OCI-LY7 (cell line): ENCODE measurements at regions of chr14 and their contacts with region 1.

Region 1: DNA sequence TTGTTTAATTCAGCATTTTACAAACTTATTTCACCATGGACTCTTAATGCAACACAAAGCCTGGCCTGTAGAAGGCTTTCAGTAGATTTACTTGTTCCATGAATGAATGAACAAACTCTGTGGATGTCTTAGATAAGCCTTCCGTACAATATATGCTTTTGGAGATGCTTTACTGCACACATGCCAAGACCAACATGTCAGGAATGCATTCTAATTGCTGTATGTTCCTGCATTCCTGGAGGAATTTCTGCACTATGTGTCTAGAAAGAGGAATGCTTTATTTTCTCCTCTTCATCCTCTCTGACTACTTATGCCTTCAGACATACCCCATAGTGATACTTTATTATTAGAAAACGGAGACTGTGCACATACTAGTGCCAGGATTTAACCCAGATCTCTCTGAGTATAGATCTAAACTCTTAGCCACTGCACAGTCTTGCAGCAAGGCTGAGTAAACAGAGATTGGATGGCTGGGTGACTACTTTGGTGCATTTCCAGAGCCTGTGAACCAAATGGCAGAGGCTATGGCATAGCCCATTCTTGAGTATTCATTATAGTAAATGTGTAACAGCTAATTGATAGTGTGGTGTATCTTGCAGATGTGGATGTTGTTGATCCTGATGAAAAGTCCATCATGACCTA is 108.2 kb downstream of the SYNE2 start:
- DNase-seq: no peak
- H3K4me3 ChIP-seq: no peak overlapping the region
- H3K27ac ChIP-seq: no peak overlapping the region
- H3K4me1 ChIP-seq: peaks cover 15% of the 10 kb centered on the region
- CTCF ChIP-seq: no peak

Region 2: DNA sequence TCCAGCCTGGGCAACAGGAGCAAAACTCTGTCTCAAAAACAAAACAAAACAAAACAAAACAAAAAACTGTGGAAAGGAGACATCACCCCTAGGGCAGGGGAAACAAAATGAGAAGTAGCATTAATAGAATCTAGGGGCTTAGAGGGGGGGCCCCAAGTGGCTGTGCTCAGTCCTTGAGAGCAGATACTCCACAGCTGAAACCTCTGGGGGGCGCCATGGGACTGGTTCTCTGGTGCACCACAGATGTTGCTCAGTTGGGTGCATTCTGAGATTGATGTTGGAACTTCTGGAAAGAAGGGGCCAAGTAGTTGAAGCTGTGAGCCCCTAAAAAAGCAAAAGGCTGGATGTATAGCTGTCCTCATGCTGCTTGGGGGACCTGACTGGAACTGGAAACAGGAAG is 120.1 kb before region 1 on chr14:
- CTCF ChIA-PET with region 1: no interaction called
- POLR2A ChIA-PET with region 1: no interaction called
- intact Hi-C with region 1: no loop called
- DNase-seq: peak; percentile 37
- H3K4me3 ChIP-seq: no peak overlapping the region
- H3K27ac ChIP-seq: no peak overlapping the region
- H3K4me1 ChIP-seq: no peaks in the 10 kb centered on the region
- CTCF ChIP-seq: peak; percentile 67

Region 3: GRCh38 chr14:63941023-63941422 is 20.0 kb before region 1 on chr14:
- CTCF ChIA-PET with region 1: no interaction called
- POLR2A ChIA-PET with region 1: no interaction called
- intact Hi-C with region 1: no loop called
- DNase-seq: no peak
- H3K4me3 ChIP-seq: no peak overlapping the region
- H3K27ac ChIP-seq: peak overlapping the region; percentile 70
- H3K4me1 ChIP-seq: peaks cover 40% of the 10 kb centered on the region
- CTCF ChIP-seq: no peak

Region 4: GRCh38 chr14:64942531-64943111 is 981.6 kb after region 1 on chr14 and contains the start of gene GPX2:
- CTCF ChIA-PET with region 1: no interaction called
- POLR2A ChIA-PET with region 1: no interaction called
- intact Hi-C with region 1: loop called (anchors 10 kb)
- DNase-seq: no peak
- H3K4me3 ChIP-seq: no peak within 1 kb of the TSS
- H3K27ac ChIP-seq: no peak within 1 kb of the TSS
- H3K4me1 ChIP-seq: no peaks in the 10 kb centered on the region
- CTCF ChIP-seq: no peak
- total RNA-seq, gene GPX2: not detected in 2 replicates